ENCODE measurements at regions of chr12 and their contacts with region 1.

Region 1: GRCh38 chr12:63843721-63844390 is 644 bp upstream of the SRGAP1 start:
- DNase-seq: peak; percentile 97
- H3K4me3 ChIP-seq: peak overlapping the region; percentile 71 to 92 (median 85)
- H3K27ac ChIP-seq: peak overlapping the region; percentile 89 to 99 (median 95)
- H3K4me1 ChIP-seq: peaks cover 0 to 27% (median 21%) of the 10 kb centered on the region in 4 donors
- H3K27me3 ChIP-seq: no peaks in the 10 kb centered on the region
- CTCF ChIP-seq: peak; percentile 68 to 91 (median 85)
- EP300 ChIP-seq: no peak
- POLR2A ChIP-seq: no peak

Region 2: GRCh38 chr12:63876980-63877379 is 33.1 kb after region 1 on chr12:
- intact Hi-C with region 1: no loop called
- DNase-seq: no peak
- H3K4me3 ChIP-seq: no peak overlapping the region
- H3K27ac ChIP-seq: no peak overlapping the region
- H3K4me1 ChIP-seq: no peaks in the 10 kb centered on the region
- H3K27me3 ChIP-seq: no peaks in the 10 kb centered on the region
- CTCF ChIP-seq: no peak
- EP300 ChIP-seq: no peak
- POLR2A ChIP-seq: no peak

Region 3: DNA sequence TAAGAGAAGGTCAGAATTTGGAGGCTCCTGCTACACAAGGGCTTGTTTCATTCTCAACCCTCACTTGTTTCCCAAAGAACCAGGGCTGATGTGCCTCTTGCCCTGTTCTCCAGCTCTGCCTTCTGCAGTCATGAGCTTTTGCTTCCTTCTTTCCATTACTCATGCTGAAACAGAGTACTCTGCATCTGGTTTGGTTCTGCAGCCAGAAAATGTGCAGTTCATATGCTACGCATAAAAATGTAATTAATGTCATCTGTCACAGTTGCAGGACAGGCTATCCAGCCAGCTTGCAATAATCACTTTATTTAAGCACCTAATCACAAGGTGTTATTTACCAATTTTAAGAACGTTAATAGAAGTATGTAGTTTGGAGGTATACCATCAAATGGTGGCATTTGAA is 150.8 kb after region 1 on chr12:
- intact Hi-C with region 1: loop called (anchors 5 kb)
- DNase-seq: no peak
- H3K4me3 ChIP-seq: no peak overlapping the region
- H3K27ac ChIP-seq: no peak overlapping the region
- H3K4me1 ChIP-seq: peaks cover 0 to 24% (median 20%) of the 10 kb centered on the region in 4 donors
- H3K27me3 ChIP-seq: no peaks in the 10 kb centered on the region
- CTCF ChIP-seq: no peak
- EP300 ChIP-seq: no peak
- POLR2A ChIP-seq: no peak

Region 4: GRCh38 chr12:64099397-64099796 is 255.5 kb after region 1 on chr12:
- intact Hi-C with region 1: loop called (anchors 5 kb)
- DNase-seq: peak; percentile 83
- H3K4me3 ChIP-seq: no peak overlapping the region
- H3K27ac ChIP-seq: peak overlapping the region; percentile 56 to 83 (median 78)
- H3K4me1 ChIP-seq: peaks cover 0 to 32% (median 26%) of the 10 kb centered on the region in 4 donors
- H3K27me3 ChIP-seq: no peaks in the 10 kb centered on the region
- CTCF ChIP-seq: no peak
- EP300 ChIP-seq: peak in 2 of 4 donors; percentile 58 to 71
- POLR2A ChIP-seq: no peak

Region 5: DNA sequence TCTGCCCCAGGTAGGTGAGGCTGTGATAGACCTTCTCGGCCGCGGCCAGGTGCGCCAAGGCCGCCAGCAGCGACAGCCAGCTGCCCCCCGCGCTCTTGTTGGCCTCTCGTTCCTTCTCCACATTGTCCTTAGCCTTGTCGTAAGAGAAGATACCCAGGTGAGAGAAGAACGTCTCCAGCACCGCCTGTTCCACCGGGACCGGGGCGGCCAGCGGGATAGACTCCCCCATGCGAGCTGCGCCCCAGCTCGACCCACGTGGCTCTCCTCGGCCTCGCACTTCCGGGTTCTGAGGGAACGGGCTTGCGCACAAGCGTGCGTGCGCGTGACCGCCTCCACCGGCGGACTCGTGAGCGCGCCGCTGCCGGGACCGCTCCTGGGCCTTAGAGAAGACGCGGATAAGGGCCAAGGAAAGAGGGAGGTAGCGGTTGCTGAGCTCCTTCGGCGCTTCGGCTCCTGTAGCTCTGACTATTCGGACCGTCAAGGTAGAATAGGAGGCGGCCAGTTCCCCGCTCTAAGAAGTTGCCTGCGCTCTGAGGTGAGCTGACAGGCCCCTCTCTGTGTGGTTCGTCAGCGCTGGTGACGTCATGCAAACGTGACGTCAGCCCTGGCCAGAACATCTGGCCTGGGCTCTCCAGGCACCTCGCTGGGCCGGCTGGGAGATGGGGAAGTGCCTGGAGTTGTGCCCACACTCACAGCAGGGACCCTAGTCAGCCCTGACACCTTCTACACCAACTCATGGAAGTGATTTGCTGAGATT is 378.3 kb after region 1 on chr12 and contains the start of gene KICS2:
- intact Hi-C with region 1: loop called (anchors 1 kb)
- DNase-seq: peak; percentile 96
- H3K4me3 ChIP-seq: peak within 1 kb of the TSS; percentile 71 to 92 (median 80)
- H3K27ac ChIP-seq: peak within 1 kb of the TSS; percentile 90 to 93 (median 91)
- H3K4me1 ChIP-seq: peaks cover 0 to 10% (median 4%) of the 10 kb centered on the region in 4 donors
- H3K27me3 ChIP-seq: no peaks in the 10 kb centered on the region
- CTCF ChIP-seq: no peak
- EP300 ChIP-seq: no peak
- POLR2A ChIP-seq: peak; percentile 74 to 84
- total RNA-seq, gene KICS2: 3.6 to 10.7 (median 7.7) TPM

Region 6: DNA sequence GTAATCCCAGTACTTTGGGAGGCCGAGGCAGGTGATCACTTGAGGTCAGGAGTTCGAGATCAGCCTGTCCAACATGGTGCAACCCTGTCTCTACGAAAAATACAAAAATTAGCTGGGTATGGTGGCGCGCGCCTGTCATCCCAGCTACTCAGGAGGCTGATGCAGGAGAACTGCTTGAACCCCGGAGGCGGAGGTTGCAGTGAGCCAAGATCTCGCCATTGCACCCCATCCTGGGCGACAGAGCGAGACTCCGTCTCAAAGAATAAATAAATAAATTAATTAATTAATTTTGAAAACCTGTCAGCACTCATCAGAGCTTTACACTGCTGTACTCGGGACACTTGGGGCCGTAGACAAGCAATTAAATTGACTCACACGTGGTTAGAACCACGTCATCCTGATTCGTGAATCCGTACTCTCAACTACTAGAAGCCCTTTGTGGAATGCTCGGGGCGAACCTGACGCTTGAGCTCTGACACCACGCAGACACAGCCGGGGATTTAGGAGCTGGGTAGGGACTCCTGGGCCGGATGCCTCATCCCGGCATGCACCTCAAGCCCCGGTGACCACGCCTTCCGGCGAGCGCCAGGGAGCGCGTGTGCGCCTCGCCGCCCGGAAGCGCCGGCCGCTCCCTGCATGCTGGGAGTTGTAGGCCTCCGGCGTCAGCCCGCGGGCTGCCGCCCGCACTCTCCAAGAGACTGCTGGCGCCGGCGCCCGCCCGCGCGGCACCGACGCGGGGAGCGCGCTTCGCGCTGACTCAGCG is 560.0 kb after region 1 on chr12 and contains the start of gene XPOT:
- intact Hi-C with region 1: loop called (anchors 2 kb)
- DNase-seq: peak; percentile 97
- H3K4me3 ChIP-seq: peak within 1 kb of the TSS; percentile 85 to 97 (median 94)
- H3K27ac ChIP-seq: peak within 1 kb of the TSS; percentile 96 to 100 (median 98)
- H3K4me1 ChIP-seq: peaks cover 0 to 21% (median 11%) of the 10 kb centered on the region in 4 donors
- H3K27me3 ChIP-seq: no peaks in the 10 kb centered on the region
- CTCF ChIP-seq: no peak
- EP300 ChIP-seq: peak in 2 of 4 donors; percentile 39 to 62
- POLR2A ChIP-seq: no peak
- total RNA-seq, gene XPOT: 26.9 to 33.4 (median 30.1) TPM